ENCODE measurements at regions of chr20 and their contacts with region 1.

Region 1: GRCh38 chr20:49484180-49485140 is 2.0 kb upstream of the KCNB1 start:
- DNase-seq: peak; percentile 83 to 86
- ATAC-seq: peak; percentile 91 to 98
- H3K4me3 ChIP-seq: peak overlapping the region; percentile 51
- H3K27ac ChIP-seq: peak overlapping the region; percentile 48 to 67; a peak in 4 of 6 replicates
- H3K4me1 ChIP-seq: peaks cover 11% of the 10 kb centered on the region; the same call in 2 of the 3 replicates
- CTCF ChIP-seq: peak; percentile 89
- EP300 ChIP-seq: no peak
- POLR2A ChIP-seq: no peak
- RAD21 ChIP-seq: peak; percentile 75 to 92

Region 2: DNA sequence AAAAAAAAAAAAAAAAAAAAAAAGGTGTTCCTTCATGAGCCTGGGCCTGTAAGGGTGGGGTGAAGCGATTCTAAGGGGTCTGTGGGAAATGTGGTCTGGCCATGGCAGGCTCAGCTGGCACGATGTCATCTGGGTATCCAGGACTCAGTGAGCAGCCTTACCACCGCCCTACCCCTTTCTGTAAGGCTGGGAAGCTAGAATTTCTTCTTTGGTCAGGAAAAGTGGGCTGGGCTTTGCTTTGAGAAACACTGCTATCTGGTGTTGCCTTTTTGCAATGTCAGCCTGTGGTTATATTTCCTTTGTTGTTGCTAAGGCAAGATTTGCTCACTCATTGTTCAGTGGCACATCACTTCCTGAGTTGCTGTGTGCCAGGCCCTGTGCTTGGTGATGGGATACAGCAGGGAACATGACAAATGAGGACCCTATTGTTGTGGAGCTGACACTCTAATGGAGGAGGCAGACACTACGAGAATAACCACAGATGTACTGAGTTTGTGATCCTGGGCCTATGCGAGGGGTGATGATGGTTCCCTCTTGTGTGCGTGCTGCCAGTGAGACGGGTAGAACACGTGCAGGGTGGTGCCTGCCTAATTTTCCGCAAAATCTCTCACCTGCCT is 160.7 kb before region 1 on chr20:
- CTCF ChIA-PET with region 1: interaction called, 291 read pairs
- POLR2A ChIA-PET with region 1: no interaction called
- DNase-seq: peak in 1 of 2 experiments; percentile 47
- ATAC-seq: peak; percentile 58 to 68
- H3K4me3 ChIP-seq: no peak overlapping the region
- H3K27ac ChIP-seq: no peak overlapping the region
- H3K4me1 ChIP-seq: peaks cover 4% of the 10 kb centered on the region; the same call in 1 of the 3 replicates
- CTCF ChIP-seq: no peak
- EP300 ChIP-seq: no peak
- POLR2A ChIP-seq: no peak
- RAD21 ChIP-seq: peak; percentile 33 to 44; a peak in 2 of 5 replicates

Region 3: DNA sequence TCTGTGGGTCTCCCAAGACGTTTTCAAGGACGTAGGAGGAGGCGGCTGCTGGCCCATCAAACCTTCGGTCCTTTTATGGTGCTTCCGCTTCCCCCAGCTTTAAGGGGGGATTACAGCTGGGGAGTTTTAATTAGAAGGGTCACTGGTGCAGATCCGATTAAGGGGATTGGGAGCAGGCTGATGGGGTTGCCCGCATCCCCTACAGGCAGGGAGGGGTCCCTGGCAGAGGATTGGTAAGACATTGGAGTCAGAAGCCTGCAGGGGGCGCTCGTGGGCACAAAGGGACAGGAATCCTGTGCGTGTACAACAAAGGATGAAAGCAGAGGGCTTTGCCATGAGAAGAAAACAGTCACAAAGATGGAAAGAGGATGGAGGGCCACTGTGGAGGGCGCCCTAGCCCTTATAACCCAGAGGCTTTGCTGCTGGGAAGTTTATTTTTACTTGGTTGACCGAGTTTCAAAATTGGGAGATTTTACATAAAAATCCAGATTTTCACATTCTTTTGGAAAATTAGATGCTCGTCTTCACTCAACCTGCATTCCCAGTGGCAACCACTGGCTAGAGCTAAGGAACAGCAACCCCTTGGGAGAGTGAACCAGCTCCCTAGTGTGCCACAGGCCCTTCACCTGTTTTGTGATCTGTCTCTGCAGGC is 99.9 kb before region 1 on chr20:
- CTCF ChIA-PET with region 1: interaction called, 31 read pairs
- POLR2A ChIA-PET with region 1: no interaction called
- DNase-seq: peak; percentile 39 to 74
- ATAC-seq: peak; percentile 73 to 87
- H3K4me3 ChIP-seq: no peak overlapping the region
- H3K27ac ChIP-seq: no peak overlapping the region; a peak in 1 of 6 replicates
- H3K4me1 ChIP-seq: peaks cover 26% of the 10 kb centered on the region
- CTCF ChIP-seq: peak; percentile 67
- EP300 ChIP-seq: no peak
- POLR2A ChIP-seq: no peak
- RAD21 ChIP-seq: peak; percentile 26 to 34; a peak in 3 of 5 replicates

Region 4: DNA sequence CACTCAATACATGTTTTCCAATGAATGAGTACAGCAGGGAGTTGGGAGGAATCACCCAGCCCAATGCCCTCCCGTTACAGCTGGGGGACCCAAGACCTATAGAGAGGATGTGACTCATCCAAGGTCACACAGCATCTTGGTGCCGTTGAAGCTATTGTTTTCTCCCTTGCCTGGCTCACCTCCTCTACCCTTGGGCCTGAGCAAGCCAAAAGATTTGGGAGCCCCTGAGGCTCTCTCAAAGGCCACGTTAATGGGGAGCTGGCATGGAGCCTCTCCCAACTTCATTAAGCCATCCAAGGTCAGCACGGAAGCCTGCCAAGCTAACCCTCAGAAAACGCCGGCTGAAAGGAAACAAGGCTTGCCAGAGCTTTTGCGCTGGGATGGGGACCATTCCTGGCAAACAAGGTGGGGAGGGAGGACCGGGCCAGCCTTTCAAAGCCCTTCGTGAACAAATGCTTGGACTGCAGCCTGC is 32.4 kb before region 1 on chr20:
- CTCF ChIA-PET with region 1: interaction called, 16 read pairs
- POLR2A ChIA-PET with region 1: no interaction called
- DNase-seq: no peak
- ATAC-seq: no peak
- H3K4me3 ChIP-seq: no peak overlapping the region
- H3K27ac ChIP-seq: no peak overlapping the region
- H3K4me1 ChIP-seq: no peaks in the 10 kb centered on the region
- CTCF ChIP-seq: no peak
- EP300 ChIP-seq: no peak
- POLR2A ChIP-seq: no peak
- RAD21 ChIP-seq: no peak

Region 5: GRCh38 chr20:49508435-49509199 is 24.2 kb after region 1 on chr20:
- CTCF ChIA-PET with region 1: interaction called, 175 read pairs
- POLR2A ChIA-PET with region 1: interaction called, 4 read pairs
- DNase-seq: peak; percentile 52 to 61
- ATAC-seq: peak; percentile 66 to 80
- H3K4me3 ChIP-seq: no peak overlapping the region
- H3K27ac ChIP-seq: peak overlapping the region; percentile 21 to 50; a peak in 2 of 6 replicates
- H3K4me1 ChIP-seq: peaks cover 12% of the 10 kb centered on the region; the same call in 1 of the 3 replicates
- CTCF ChIP-seq: peak; percentile 81
- EP300 ChIP-seq: no peak
- POLR2A ChIP-seq: no peak
- RAD21 ChIP-seq: peak; percentile 67 to 72

Region 6: DNA sequence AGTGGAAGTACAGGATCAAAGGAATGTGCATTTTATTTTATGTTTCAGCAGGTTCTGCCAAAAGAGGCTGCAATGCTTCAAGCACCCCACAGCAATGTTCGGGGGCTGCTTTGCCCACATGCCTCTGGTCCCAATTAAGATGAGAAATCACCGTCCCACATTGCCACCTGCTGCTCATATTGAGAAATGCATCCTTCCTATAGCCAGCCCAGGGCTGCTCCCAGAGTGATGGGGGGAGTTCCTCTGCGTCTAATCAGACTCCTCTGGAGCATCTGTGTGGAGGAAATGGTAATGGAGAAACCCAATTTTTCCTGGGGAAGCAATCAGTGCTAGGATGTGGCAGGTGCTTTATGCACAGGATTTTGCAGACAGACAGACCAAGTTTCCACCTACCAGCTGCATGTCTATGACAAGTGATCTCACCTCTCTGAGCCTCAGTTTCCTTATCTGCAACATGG is 49.8 kb after region 1 on chr20:
- CTCF ChIA-PET with region 1: interaction called, 44 read pairs
- POLR2A ChIA-PET with region 1: no interaction called
- DNase-seq: peak; percentile 57 to 80
- ATAC-seq: peak; percentile 91
- H3K4me3 ChIP-seq: no peak overlapping the region
- H3K27ac ChIP-seq: no peak overlapping the region
- H3K4me1 ChIP-seq: no peaks in the 10 kb centered on the region
- CTCF ChIP-seq: peak; percentile 85
- EP300 ChIP-seq: no peak
- POLR2A ChIP-seq: no peak
- RAD21 ChIP-seq: peak; percentile 81 to 82